MCF 10A (cell line): ENCODE measurements at regions of chr12 and their contacts with region 1.

Region 1: DNA sequence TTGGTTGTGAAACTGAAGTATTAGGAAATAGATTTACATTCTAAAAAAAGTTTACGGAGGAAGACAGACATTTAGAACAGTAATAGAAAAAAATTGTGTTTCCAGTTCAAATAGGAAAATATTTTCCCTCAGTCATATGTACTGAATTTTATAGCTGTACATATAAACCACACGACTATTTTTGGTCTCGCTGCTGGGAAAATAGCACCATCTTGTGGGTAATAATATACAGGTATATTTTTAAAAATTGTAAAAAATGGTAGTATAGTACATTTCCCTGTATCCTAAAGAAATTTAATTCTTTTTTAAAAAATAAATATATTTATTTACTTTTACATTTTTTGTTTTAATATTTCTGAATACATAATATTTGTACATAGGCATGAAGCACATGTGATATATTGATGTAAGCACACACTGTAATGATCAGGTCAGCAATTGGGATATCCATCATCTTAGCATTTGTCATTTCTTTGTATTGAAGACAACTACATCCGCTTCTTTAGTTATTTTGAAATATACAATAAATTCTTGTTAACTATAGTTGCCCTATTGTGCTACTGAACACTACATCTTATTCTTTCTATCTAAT is 168.6 kb downstream of the ALX1 start:
- DNase-seq: peak; percentile 32
- H3K4me3 Mint-ChIP-seq: no peak overlapping the region
- H3K27ac Mint-ChIP-seq: no peak overlapping the region
- H3K4me1 Mint-ChIP-seq: peaks cover 6% of the 10 kb centered on the region
- H3K27me3 Mint-ChIP-seq: no peaks in the 10 kb centered on the region
- CTCF ChIP-seq: peak; percentile 43

Region 2: DNA sequence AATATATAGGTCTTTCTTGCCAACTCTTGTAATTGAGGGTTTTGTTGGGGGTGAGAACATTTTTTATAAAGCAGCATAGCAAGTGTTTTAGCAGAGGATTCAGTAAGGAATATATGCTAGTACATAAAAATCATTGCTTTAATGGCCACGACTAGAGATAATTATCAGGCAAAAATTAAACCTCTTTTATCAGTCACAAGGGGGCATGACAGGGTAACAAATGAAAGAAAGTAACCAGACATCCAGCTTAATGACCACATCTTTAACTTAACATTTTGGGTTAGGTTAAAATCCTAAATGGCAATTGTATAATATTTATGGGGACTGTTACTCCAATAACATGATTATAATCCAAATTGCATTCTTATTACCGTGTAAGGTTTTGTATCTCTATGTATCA is 292.9 kb before region 1 on chr12:
- CTCF ChIA-PET with region 1: interaction called, 4 read pairs
- POLR2A ChIA-PET with region 1: no interaction called
- intact Hi-C with region 1: loop called (anchors 1 kb)
- DNase-seq: peak; percentile 60
- H3K4me3 Mint-ChIP-seq: no peak overlapping the region
- H3K27ac Mint-ChIP-seq: no peak overlapping the region
- H3K4me1 Mint-ChIP-seq: no peaks in the 10 kb centered on the region
- H3K27me3 Mint-ChIP-seq: no peaks in the 10 kb centered on the region
- CTCF ChIP-seq: peak; percentile 37

Region 3: GRCh38 chr12:85662207-85662602 is 213.6 kb after region 1 on chr12:
- CTCF ChIA-PET with region 1: no interaction called
- POLR2A ChIA-PET with region 1: no interaction called
- intact Hi-C with region 1: no loop called
- DNase-seq: no peak
- H3K4me3 Mint-ChIP-seq: no peak overlapping the region
- H3K27ac Mint-ChIP-seq: no peak overlapping the region
- H3K4me1 Mint-ChIP-seq: no peaks in the 10 kb centered on the region
- H3K27me3 Mint-ChIP-seq: no peaks in the 10 kb centered on the region
- CTCF ChIP-seq: no peak